ENCODE measurements at regions of chr10 and their contacts with region 1.

Region 1: DNA sequence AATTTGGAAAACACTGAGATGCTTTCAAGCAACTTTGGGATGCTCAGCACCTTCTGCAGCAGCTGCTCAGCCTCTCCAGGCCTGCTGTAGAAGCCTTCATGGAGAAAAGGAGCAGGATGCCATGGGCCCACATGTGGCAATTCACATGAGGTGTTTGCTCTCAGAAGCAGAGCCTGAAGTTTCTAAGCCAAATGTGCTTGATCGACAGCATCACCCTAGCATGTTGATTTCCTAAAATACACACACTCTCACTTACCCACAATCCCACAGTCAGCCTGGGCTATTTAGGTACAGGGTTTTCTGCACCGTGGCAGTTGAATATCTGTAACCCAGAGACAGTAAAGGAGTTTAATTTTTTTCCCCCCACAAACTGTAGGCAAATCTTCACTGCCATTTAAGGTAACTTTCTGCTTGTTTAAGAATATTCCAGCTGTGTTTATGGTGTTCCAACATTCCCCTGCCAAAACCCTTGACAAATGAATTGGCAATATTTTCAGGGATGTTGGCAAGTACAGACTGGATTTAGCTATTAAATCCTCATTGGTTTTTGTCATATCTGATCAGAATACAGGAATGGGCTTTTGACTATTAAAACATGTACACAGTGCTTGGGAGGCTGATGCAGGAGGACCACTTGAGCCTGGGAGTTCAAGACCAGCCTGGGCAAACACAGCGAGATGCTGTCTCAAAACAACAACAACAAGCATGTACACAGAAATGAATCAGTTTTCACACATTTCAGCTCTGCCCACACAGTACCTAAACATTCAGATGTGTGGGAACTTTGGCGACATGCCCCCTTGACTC is 244.2 kb downstream of the CELF2 start:
- DNase-seq: no peak
- H3K4me3 Mint-ChIP-seq: no peak overlapping the region
- H3K27ac Mint-ChIP-seq: peak overlapping the region; percentile 61
- H3K4me1 Mint-ChIP-seq: peaks cover 61% of the 10 kb centered on the region
- H3K27me3 Mint-ChIP-seq: no peaks in the 10 kb centered on the region

Region 2: DNA sequence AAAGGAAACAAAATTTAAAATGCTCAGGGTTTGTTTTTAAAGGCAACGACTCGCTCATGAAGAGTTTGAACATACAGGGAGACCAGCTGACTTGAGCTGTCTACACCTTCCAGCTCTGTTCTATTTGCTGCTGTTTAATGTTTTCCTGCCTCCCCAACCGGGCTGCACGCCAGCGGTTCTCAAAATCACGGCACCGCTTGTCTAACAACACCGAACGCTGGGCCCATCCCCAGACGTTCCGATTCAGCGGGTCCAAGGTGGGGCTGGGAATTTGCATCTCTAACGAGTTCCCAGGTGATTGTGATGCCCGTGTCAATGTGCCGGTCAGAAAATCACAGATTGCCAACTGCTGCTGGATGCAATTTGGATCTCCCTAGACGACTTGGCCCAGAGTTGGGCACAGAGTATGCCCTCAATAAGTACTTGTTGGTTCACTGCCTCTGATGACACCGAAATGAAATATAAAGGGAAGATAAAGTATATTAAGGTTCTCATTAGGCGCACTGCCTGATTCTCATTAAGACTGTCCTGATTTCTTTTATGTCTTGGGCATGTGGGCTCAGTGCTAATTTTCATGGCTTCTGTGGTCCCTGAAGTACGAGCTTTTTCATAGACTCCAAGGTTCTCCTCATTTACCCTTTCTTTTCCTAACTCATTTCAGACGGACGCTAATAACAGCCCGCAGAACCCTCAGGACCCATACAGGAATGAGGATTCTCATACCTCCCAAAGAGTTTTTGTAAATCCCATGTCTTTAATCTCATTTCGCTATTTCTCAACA is 215.7 kb before region 1 on chr10:
- intact Hi-C with region 1: no loop called
- DNase-seq: no peak
- H3K4me3 Mint-ChIP-seq: no peak overlapping the region
- H3K27ac Mint-ChIP-seq: no peak overlapping the region
- H3K4me1 Mint-ChIP-seq: peaks cover 3% of the 10 kb centered on the region
- H3K27me3 Mint-ChIP-seq: peaks cover 53% of the 10 kb centered on the region

Region 3: GRCh38 chr10:11245510-11245909 is 16.4 kb before region 1 on chr10:
- intact Hi-C with region 1: loop called (anchors 2 kb)
- DNase-seq: no peak
- H3K4me3 Mint-ChIP-seq: no peak overlapping the region
- H3K27ac Mint-ChIP-seq: no peak overlapping the region
- H3K4me1 Mint-ChIP-seq: peaks cover 41% of the 10 kb centered on the region
- H3K27me3 Mint-ChIP-seq: no peaks in the 10 kb centered on the region